ENCODE measurements at regions of chr11 and their contacts with region 1.

Region 1: GRCh38 chr11:117002639-117003299 is 95.5 kb downstream of the SIK3 start:
- DNase-seq: peak; percentile 47
- H3K4me3 Mint-ChIP-seq: no peak overlapping the region
- H3K27ac Mint-ChIP-seq: peak overlapping the region; percentile 91
- H3K4me1 Mint-ChIP-seq: peaks cover 59% of the 10 kb centered on the region
- H3K27me3 Mint-ChIP-seq: no peaks in the 10 kb centered on the region

Region 2: GRCh38 chr11:116930177-116930576 is 72.6 kb before region 1 on chr11:
- intact Hi-C with region 1: loop called (anchors 2 kb)
- DNase-seq: peak; percentile 43
- H3K4me3 Mint-ChIP-seq: peak overlapping the region; percentile 78
- H3K27ac Mint-ChIP-seq: peak overlapping the region; percentile 83
- H3K4me1 Mint-ChIP-seq: peaks cover 67% of the 10 kb centered on the region
- H3K27me3 Mint-ChIP-seq: no peaks in the 10 kb centered on the region

Region 3: DNA sequence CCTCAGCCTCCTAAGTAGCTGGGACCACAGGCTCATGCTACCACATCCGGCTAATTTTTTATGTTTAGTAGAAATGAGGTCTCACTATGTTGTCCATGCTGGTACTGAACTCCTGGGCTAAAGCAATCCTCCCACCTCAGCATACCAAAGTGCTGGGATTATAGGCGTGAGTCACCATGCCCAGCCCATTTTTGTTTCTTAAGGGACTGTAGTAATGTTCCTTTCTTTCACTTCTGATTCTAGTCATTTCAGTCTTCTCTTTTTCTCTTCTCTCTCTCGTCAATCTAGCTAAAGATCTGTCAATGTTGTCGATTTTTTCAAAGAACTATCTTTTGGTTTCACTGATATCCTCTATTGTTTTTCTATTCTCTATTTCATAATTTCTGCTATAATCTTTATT is 54.4 kb before region 1 on chr11:
- intact Hi-C with region 1: loop called (anchors 1 kb)
- DNase-seq: no peak
- H3K4me3 Mint-ChIP-seq: no peak overlapping the region
- H3K27ac Mint-ChIP-seq: no peak overlapping the region
- H3K4me1 Mint-ChIP-seq: peaks cover 18% of the 10 kb centered on the region
- H3K27me3 Mint-ChIP-seq: no peaks in the 10 kb centered on the region

Region 4: GRCh38 chr11:116960930-116961329 is 41.8 kb before region 1 on chr11:
- intact Hi-C with region 1: no loop called
- DNase-seq: no peak
- H3K4me3 Mint-ChIP-seq: no peak overlapping the region
- H3K27ac Mint-ChIP-seq: no peak overlapping the region
- H3K4me1 Mint-ChIP-seq: peaks cover 9% of the 10 kb centered on the region
- H3K27me3 Mint-ChIP-seq: no peaks in the 10 kb centered on the region

Region 5: DNA sequence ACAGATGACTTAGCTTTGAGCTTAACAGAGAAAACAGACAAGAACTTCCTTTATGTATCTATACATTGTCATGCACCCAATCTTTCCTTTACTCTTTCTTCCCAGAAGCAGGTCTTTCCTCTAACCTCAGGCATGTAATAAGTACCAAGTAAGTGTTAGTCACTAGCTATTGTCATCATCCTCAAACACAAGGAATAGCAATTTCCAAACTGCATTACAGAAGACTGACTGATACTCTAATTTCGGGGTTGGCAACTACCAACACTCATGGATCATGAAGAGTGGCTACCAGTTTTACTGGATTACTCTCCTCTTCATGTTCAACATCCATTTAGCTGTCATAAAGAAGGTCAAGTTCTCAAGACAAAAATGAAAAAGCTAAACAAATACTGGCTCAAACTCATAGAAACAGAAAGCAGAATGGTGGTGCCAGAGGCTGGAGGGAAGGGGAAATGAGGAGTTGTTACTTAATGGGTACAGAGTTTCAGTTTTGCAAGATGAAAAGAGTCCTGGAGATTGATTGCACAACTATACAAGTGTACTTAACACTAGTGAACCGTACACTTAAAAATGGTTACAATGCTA is 16.2 kb before region 1 on chr11:
- intact Hi-C with region 1: loop called (anchors 1 kb)
- DNase-seq: no peak
- H3K4me3 Mint-ChIP-seq: peak overlapping the region; percentile 49
- H3K27ac Mint-ChIP-seq: peak overlapping the region; percentile 80
- H3K4me1 Mint-ChIP-seq: peaks cover 56% of the 10 kb centered on the region
- H3K27me3 Mint-ChIP-seq: no peaks in the 10 kb centered on the region

Region 6: DNA sequence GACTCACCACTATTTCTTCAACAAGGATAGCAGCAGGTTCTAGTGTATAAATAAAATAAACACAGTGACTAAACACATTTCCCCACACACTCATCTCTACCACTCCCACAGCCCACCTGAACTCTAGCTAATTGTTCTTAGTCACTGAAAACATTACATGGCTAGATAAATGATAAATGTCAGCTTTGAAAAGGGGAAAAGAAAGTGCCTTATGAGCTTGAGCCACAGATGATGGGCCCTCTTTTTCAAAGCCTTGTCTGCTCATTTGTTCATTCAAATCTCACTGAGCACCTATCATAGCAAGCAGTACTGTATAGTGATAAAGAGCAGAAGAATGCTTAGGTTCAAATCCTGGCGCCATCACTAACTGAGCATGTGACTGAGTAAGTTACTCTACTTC is 37.1 kb after region 1 on chr11:
- intact Hi-C with region 1: loop called (anchors 1 kb)
- DNase-seq: no peak
- H3K4me3 Mint-ChIP-seq: no peak overlapping the region
- H3K27ac Mint-ChIP-seq: no peak overlapping the region
- H3K4me1 Mint-ChIP-seq: peaks cover 60% of the 10 kb centered on the region
- H3K27me3 Mint-ChIP-seq: no peaks in the 10 kb centered on the region

Region 7: DNA sequence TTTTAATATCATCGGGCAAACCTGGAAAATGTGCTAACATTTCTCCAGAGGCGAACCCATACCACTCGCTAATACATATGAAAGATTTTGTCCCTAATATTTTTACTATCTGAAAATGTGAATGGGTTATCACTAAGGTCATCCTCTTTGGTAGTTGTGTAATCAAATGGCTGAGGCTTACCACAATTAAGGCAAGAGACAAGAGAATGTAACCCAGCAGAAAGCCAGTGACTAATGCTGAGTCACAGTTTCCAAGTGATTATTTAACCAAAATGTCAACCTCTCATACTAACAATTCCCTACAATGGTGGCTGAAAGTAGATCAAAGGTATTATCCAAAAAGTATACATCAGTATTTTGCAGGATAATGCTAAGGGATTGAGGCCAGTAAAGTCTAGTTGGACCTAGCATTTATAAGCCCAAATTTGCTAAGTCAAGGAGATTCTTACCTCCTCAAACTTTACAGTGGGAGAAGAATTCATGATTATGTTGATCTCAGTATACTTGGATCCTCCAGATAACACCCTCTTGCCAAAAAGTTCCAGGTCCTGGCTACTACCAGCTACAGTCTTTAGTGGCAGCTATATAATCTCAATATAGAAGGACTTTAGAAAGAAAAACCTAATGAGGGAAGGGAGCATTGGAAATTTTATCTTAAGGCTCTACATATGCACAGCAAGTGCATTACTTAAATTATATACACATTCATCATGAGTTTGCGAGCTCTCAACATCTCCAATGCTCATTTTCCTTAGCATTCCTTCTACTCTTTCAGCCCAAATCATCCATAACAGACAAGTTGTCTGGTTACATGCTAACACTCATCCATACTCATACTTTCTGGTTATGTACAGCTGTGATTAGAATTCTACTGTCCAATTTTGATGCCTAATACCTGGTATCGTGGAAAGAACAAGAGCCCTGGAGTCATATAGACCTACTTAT is 70.0 kb after region 1 on chr11:
- intact Hi-C with region 1: loop called (anchors 2 kb)
- DNase-seq: no peak
- H3K4me3 Mint-ChIP-seq: no peak overlapping the region
- H3K27ac Mint-ChIP-seq: no peak overlapping the region
- H3K4me1 Mint-ChIP-seq: peaks cover 41% of the 10 kb centered on the region
- H3K27me3 Mint-ChIP-seq: no peaks in the 10 kb centered on the region

Measured in activated T-helper 2 cell treated with anti-CD3 and anti-CD28 coated beads, Interferon-gamma antibody, Interleukin-2, Interleukin-4, amounts not matched to agents 10 μg/mL and 5 μg/mL and 100 μg/mL, durations not matched to agents 14 hours and 24 hours and 36 hours (primary cell).